ENCODE measurements at regions of chr5 and their contacts with region 1.

Region 1: GRCh38 chr5:146426853-146427618 is 20.1 kb upstream of the TCERG1 start:
- DNase-seq: peak in 1 of 42 donors; percentile 40

Region 2: GRCh38 chr5:146291421-146292074 is 135.5 kb before region 1 on chr5:
- intact Hi-C with region 1: loop called (anchors 10 kb)
- DNase-seq: peak in 4 of 42 donors; percentile 4 to 31 (median 6)

Region 3: DNA sequence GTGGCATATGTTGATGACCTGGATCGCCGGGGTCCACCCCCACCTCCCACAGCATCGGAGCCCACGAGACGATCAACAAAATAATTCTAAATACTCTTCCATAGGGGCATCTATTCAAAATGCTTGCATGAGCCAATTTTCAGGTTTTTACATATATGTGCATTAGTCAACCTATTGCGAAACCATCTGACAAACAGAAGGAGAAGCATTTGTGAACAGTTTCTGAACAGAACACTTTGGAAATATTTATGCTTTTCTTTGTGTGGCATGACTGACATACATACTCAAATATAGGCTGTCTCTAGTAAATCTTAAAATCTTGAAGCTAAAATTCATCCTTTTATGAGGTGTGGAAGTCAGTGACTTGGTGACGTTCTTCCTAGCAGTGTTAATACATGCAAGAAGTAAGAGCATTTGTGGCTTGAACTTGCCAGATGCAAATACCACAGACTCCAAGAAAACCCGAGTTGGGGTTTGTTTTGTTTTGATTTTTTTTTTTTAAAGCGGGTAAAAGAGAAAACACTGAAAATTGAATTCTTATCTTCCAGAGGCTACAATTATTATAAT is 83.6 kb after region 1 on chr5:
- intact Hi-C with region 1: no loop called
- DNase-seq: no peak